ENCODE measurements at regions of chr13 and their contacts with region 1.

Region 1: DNA sequence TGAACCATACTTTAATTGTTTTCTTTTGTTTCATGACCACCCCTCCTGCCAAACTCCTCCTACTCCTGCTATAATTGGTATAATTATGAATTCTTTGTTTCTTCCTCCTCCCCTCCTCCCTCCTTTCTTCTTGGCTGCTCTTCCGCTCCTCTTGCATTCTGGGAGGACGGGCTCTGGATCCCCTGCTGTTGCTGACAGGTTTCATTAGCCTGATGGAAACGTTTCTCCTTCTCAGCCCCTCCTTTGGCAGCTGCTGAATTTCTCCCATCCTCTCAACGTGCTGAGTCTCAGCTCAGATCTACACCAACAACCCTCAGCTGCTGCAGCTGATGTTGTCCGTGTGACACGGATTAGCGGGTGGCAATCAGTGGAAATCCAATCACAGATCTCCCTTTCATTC is 97.1 kb upstream of the UBAC2 start:
- DNase-seq: no peak
- ATAC-seq: no peak
- H3K4me3 ChIP-seq: no peak overlapping the region
- H3K4me3 Mint-ChIP-seq: no peak overlapping the region
- H3K27ac ChIP-seq: no peak overlapping the region
- H3K27ac Mint-ChIP-seq: no peak overlapping the region
- H3K4me1 ChIP-seq: no peaks in the 10 kb centered on the region
- H3K4me1 Mint-ChIP-seq: peaks cover 0 to 5% (median 0%) of the 10 kb centered on the region in 3 donors
- H3K27me3 ChIP-seq: peaks cover 0 to 4% of the 10 kb centered on the region in 2 experiments
- H3K27me3 Mint-ChIP-seq: peaks cover 5 to 12% of the 10 kb centered on the region in 2 donors

Region 2: DNA sequence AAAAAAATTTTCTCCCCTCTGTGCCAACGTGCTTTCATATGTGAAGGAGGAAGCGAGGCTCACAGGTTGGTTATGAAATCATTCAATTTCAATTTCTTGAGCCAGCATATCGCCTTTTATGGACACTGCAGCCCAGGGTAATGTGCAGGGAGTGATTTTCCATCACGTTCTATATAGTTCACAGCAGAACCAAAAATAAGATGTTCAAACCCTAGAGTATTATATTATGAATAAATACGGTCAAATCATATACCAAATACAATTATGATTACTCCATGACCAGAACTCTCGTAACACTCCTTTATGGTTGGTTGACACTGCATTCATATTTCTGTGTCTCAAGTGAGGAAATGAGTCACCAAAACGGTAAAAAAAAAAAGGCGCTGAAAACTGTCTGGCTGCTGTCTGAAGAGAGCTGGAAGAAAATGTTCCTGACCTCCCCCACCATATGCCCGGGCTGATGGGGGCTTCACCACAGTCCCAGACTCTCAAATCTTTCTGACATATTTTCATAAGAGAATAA is 21.3 kb after region 1 on chr13:
- CTCF ChIA-PET with region 1: no interaction called
- POLR2A ChIA-PET with region 1: interaction called in 1 of 2 experiments, 10 read pairs
- DNase-seq: peak in 1 of 35 experiments; percentile 37
- ATAC-seq: peak; percentile 23 to 65 (median 52)
- H3K4me3 ChIP-seq: no peak overlapping the region
- H3K4me3 Mint-ChIP-seq: no peak overlapping the region
- H3K27ac ChIP-seq: no peak overlapping the region
- H3K27ac Mint-ChIP-seq: no peak overlapping the region
- H3K4me1 ChIP-seq: peaks cover 0 to 5% of the 10 kb centered on the region in 2 experiments
- H3K4me1 Mint-ChIP-seq: peaks cover 14 to 17% (median 16%) of the 10 kb centered on the region in 3 donors
- H3K27me3 ChIP-seq: peaks cover 0 to 6% of the 10 kb centered on the region in 2 experiments
- H3K27me3 Mint-ChIP-seq: peaks cover 0 to 6% of the 10 kb centered on the region in 2 donors